ENCODE measurements at regions of chr7 and their contacts with region 1.

Region 1: DNA sequence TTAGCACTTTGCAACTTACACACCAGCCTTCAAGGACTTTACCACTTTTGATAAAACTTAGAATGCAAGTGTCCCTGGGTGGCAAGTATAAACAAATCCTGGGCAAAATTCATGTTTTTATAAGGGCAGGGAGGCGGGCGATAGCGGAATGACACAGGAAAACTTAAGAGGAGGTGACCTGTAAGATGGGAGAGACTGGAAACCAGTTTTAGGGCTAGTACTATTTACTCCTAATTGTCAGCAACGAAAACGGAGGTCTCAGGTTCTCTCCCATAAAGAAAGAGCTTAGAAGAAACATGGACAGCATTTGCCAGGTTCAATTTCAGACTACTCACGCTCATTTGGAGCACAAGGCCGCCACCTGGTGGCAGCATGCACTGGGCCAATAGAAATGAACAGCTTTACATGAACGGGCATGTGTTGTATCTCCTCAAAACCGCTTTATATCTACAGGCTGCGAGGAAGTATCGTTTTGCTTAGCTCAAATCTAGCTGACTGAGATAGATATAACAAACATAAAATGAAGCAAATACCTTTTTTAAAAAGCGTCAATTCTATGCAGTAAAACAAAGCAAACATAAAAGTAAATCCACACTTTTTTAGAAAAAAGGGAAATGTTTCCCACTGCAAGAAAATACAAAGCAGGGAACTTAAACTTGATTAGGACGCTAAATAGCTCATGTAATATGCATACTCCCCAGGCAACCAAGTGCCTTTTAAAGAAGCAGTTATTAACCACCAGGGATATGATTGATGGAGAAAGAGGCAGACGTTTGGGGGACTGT is 37.6 kb upstream of the SVOPL start:
- DNase-seq: peak; percentile 84
- H3K4me3 Mint-ChIP-seq: no peak overlapping the region
- H3K27ac Mint-ChIP-seq: peak overlapping the region; percentile 25
- H3K4me1 Mint-ChIP-seq: peaks cover 9% of the 10 kb centered on the region
- H3K27me3 Mint-ChIP-seq: no peaks in the 10 kb centered on the region
- CTCF ChIP-seq: peak; percentile 88

Region 2: GRCh38 chr7:138002096-138002827 is 736.5 kb before region 1 on chr7:
- CTCF ChIA-PET with region 1: interaction called, 10 read pairs
- POLR2A ChIA-PET with region 1: no interaction called
- intact Hi-C with region 1: no loop called
- DNase-seq: peak; percentile 99
- H3K4me3 Mint-ChIP-seq: peak overlapping the region; percentile 93
- H3K27ac Mint-ChIP-seq: peak overlapping the region; percentile 62
- H3K4me1 Mint-ChIP-seq: peaks cover 23% of the 10 kb centered on the region
- H3K27me3 Mint-ChIP-seq: no peaks in the 10 kb centered on the region
- CTCF ChIP-seq: peak; percentile 95

Region 3: DNA sequence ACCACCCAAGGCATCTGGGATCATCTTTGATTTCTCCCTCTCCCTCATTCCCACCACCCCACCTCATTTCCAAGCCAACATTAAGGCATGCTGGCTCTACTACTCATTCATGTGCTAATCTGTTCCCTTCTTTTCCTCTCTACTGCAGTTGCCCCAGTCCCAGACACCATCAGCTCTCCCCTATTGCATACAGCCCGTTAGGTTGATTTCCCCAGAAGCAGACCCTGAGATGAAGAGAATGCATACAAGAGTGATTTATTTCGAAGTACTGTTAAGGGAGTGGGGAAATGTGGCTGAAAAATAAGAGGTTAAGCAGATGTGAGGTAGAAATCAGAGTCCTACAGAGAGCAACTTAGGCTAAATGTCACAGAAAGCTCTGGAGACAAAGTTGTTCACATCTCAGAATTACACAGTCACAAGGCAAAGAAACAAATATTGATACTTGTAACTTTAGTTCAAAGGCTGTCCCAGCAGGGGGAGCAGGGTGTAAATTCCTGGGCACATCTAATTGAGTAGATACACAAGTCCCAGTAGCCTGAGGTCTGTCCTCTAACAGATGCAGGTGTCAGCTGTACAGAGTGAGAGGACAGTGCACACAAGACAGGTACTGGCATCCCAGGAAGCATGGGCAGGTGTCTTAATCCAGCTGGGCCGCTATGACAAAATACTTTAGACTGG is 641.5 kb before region 1 on chr7:
- CTCF ChIA-PET with region 1: interaction called, 8 read pairs
- POLR2A ChIA-PET with region 1: no interaction called
- intact Hi-C with region 1: loop called (anchors 1 kb)
- DNase-seq: peak; percentile 51
- H3K4me3 Mint-ChIP-seq: no peak overlapping the region
- H3K27ac Mint-ChIP-seq: no peak overlapping the region
- H3K4me1 Mint-ChIP-seq: peaks cover 10% of the 10 kb centered on the region
- H3K27me3 Mint-ChIP-seq: no peaks in the 10 kb centered on the region
- CTCF ChIP-seq: peak; percentile 37

Region 4: GRCh38 chr7:138243430-138243829 is 495.3 kb before region 1 on chr7:
- CTCF ChIA-PET with region 1: no interaction called
- POLR2A ChIA-PET with region 1: no interaction called
- intact Hi-C with region 1: loop called (anchors 2 kb)
- DNase-seq: no peak
- H3K4me3 Mint-ChIP-seq: no peak overlapping the region
- H3K27ac Mint-ChIP-seq: no peak overlapping the region
- H3K4me1 Mint-ChIP-seq: peaks cover 31% of the 10 kb centered on the region
- H3K27me3 Mint-ChIP-seq: no peaks in the 10 kb centered on the region
- CTCF ChIP-seq: no peak

Region 5: GRCh38 chr7:138726288-138726687 is 12.5 kb before region 1 on chr7:
- CTCF ChIA-PET with region 1: interaction called, 19 read pairs
- POLR2A ChIA-PET with region 1: no interaction called
- intact Hi-C with region 1: no loop called
- DNase-seq: no peak
- H3K4me3 Mint-ChIP-seq: no peak overlapping the region
- H3K27ac Mint-ChIP-seq: no peak overlapping the region
- H3K4me1 Mint-ChIP-seq: no peaks in the 10 kb centered on the region
- H3K27me3 Mint-ChIP-seq: no peaks in the 10 kb centered on the region
- CTCF ChIP-seq: no peak

Region 6: DNA sequence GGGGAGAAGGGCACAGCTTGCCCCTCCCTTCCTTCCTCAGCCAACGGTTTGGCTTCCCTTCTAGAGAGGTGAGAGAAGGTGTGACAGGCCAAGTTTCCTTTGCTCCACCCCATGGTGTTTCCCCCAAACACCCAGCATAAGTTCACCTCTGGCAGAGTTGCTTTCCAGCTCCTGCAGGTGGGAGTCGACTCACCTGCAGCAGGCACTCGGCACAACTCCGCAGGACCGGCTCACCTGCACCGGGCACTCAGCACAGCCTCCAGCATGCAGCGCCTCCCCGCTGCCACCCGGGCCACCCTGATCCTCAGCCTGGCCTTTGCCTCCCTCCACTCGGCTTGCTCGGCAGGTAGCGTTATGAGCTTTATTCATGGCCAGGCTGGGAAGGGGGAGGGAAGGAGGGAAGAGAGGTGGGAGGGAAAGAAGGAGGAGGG is 59.1 kb after region 1 on chr7 and contains the starts of genes ATP6V0A4 and TMEM213:
- CTCF ChIA-PET with region 1: no interaction called
- POLR2A ChIA-PET with region 1: no interaction called
- intact Hi-C with region 1: no loop called
- DNase-seq: no peak
- H3K4me3 Mint-ChIP-seq: no peak within 1 kb of the TSS
- H3K27ac Mint-ChIP-seq: no peak within 1 kb of the TSS
- H3K4me1 Mint-ChIP-seq: no peaks in the 10 kb centered on the region
- H3K27me3 Mint-ChIP-seq: no peaks in the 10 kb centered on the region
- CTCF ChIP-seq: no peak
- total RNA-seq, gene ATP6V0A4: 0.40 and 0.64 TPM in 2 replicates
- total RNA-seq, gene TMEM213: not detected in 2 replicates

Region 7: GRCh38 chr7:138865843-138866242 is 127.1 kb after region 1 on chr7:
- CTCF ChIA-PET with region 1: no interaction called
- POLR2A ChIA-PET with region 1: no interaction called
- intact Hi-C with region 1: loop called (anchors 2 kb)
- DNase-seq: no peak
- H3K4me3 Mint-ChIP-seq: no peak overlapping the region
- H3K27ac Mint-ChIP-seq: no peak overlapping the region
- H3K4me1 Mint-ChIP-seq: peaks cover 20% of the 10 kb centered on the region
- H3K27me3 Mint-ChIP-seq: no peaks in the 10 kb centered on the region
- CTCF ChIP-seq: peak; percentile 38

Measured in MCF 10A (cell line).